ENCODE measurements at regions of chr2 and their contacts with region 1.

Region 1: DNA sequence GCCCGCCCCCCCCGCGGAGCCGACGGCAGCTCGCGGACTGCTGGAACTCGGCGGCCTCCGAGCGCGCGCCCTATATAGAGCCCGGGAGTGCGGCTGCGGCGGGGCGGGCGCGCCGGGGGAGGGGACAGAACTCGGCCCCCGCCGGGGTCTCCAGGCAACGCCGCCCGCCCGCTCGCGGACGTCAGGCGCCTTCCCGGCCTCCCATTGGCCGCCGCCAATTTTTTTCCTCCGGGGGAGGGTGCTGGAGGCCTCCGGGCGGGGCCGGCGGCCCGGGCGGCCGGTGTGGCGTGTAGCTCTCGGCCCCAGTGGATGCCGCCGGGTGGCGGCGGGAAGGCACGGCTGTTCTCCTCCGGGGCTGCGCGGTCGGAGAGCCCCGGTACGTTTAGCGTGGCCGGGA is at the start of gene ZFP36L2:
- DNase-seq: peak; percentile 89 to 98 (median 97)
- ATAC-seq: peak; percentile 59
- H3K4me3 ChIP-seq: peak within 1 kb of the TSS; percentile 97
- H3K4me3 Mint-ChIP-seq: peak within 1 kb of the TSS; percentile 93
- H3K27ac ChIP-seq: peak within 1 kb of the TSS; percentile 79 to 84
- H3K27ac Mint-ChIP-seq: peak within 1 kb of the TSS; percentile 98
- H3K4me1 ChIP-seq: peaks cover 31% of the 10 kb centered on the region
- H3K4me1 Mint-ChIP-seq: peaks cover 36% of the 10 kb centered on the region
- H3K27me3 ChIP-seq: no peaks in the 10 kb centered on the region
- H3K27me3 Mint-ChIP-seq: peaks cover 15% of the 10 kb centered on the region
- CTCF ChIP-seq: no peak
- total RNA-seq, gene ZFP36L2: 1,602 to 1,631 TPM

Region 2: DNA sequence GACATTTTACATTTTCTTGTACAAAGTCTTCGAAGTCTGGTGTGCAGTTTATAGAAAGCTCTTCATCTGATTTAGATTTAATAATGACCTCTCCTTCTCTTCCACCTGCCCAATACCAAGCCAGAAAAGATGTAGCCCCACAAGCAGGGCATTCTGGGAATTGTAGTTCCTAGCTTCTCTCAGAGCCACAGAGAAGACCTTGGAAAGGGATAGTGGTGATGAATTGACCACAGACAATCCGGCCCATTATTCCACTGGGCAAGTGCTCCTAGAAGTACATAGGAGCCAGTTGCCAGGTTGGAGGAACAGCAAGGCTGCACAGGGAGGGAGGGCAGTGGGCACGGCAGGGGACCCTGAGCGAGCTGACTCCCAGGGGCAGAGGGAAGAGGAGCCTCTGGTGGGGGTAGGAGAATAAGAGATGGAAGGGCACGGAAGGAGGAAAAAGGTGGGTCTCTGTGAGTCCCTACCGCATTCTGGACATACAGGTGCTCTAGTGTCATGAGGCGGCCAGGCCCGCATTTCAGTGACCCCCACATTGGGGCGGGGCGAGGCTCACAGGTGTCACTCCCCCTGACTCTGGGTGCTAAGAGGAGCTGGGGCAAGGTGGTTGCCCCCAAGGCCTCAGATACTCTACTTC is 281.7 kb before region 1 on chr2:
- CTCF ChIA-PET with region 1: interaction called, 7 read pairs
- POLR2A ChIA-PET with region 1: interaction called, 5 read pairs
- intact Hi-C with region 1: loop called (anchors 1 kb)
- DNase-seq: no peak
- ATAC-seq: no peak
- H3K4me3 ChIP-seq: no peak overlapping the region
- H3K4me3 Mint-ChIP-seq: no peak overlapping the region
- H3K27ac ChIP-seq: no peak overlapping the region
- H3K27ac Mint-ChIP-seq: no peak overlapping the region
- H3K4me1 ChIP-seq: no peaks in the 10 kb centered on the region
- H3K4me1 Mint-ChIP-seq: peaks cover 6% of the 10 kb centered on the region
- H3K27me3 ChIP-seq: no peaks in the 10 kb centered on the region
- H3K27me3 Mint-ChIP-seq: no peaks in the 10 kb centered on the region
- CTCF ChIP-seq: no peak

Region 3: GRCh38 chr2:43024515-43025011 is 202.0 kb before region 1 on chr2:
- CTCF ChIA-PET with region 1: interaction called, 9 read pairs
- POLR2A ChIA-PET with region 1: interaction called, 4 read pairs
- intact Hi-C with region 1: loop called (anchors 1 to 2 kb)
- DNase-seq: peak in 13 of 14 experiments; percentile 9 to 62 (median 37)
- ATAC-seq: peak; percentile 66
- H3K4me3 ChIP-seq: no peak overlapping the region
- H3K4me3 Mint-ChIP-seq: no peak overlapping the region
- H3K27ac ChIP-seq: no peak overlapping the region
- H3K27ac Mint-ChIP-seq: peak overlapping the region; percentile 69
- H3K4me1 ChIP-seq: peaks cover 10% of the 10 kb centered on the region
- H3K4me1 Mint-ChIP-seq: peaks cover 28% of the 10 kb centered on the region
- H3K27me3 ChIP-seq: no peaks in the 10 kb centered on the region
- H3K27me3 Mint-ChIP-seq: no peaks in the 10 kb centered on the region
- CTCF ChIP-seq: peak; percentile 67

Region 4: DNA sequence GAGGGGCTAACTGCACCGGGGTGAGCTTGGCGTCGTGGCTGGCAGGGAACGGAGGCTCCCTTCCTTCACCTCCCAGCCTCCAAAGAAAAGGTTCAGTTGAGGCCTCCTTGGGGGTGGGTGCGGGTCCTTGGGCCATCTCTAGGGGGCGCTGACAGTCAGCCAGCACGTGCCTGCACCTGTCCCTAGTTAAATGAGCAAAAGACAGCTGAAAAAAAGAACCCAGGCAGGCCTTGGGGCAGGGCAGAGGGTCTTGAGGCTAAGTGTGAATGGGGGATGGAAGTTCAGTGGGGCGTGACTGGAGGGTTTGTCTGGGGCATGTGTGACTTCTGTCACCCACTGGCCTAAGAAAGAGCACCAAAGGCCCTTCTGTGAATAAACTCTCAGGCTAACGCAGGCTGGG is 56.6 kb before region 1 on chr2:
- CTCF ChIA-PET with region 1: interaction called, 38 read pairs
- POLR2A ChIA-PET with region 1: interaction called, 790 read pairs
- intact Hi-C with region 1: loop called (anchors 1 to 2 kb)
- DNase-seq: peak; percentile 49 to 83 (median 70)
- ATAC-seq: peak; percentile 16
- H3K4me3 ChIP-seq: peak overlapping the region; percentile 26
- H3K4me3 Mint-ChIP-seq: peak overlapping the region; percentile 13
- H3K27ac ChIP-seq: peak overlapping the region; percentile 72 to 76
- H3K27ac Mint-ChIP-seq: peak overlapping the region; percentile 97
- H3K4me1 ChIP-seq: peaks cover 85% of the 10 kb centered on the region
- H3K4me1 Mint-ChIP-seq: peaks cover 82% of the 10 kb centered on the region
- H3K27me3 ChIP-seq: no peaks in the 10 kb centered on the region
- H3K27me3 Mint-ChIP-seq: no peaks in the 10 kb centered on the region
- CTCF ChIP-seq: peak; percentile 75

Region 5: DNA sequence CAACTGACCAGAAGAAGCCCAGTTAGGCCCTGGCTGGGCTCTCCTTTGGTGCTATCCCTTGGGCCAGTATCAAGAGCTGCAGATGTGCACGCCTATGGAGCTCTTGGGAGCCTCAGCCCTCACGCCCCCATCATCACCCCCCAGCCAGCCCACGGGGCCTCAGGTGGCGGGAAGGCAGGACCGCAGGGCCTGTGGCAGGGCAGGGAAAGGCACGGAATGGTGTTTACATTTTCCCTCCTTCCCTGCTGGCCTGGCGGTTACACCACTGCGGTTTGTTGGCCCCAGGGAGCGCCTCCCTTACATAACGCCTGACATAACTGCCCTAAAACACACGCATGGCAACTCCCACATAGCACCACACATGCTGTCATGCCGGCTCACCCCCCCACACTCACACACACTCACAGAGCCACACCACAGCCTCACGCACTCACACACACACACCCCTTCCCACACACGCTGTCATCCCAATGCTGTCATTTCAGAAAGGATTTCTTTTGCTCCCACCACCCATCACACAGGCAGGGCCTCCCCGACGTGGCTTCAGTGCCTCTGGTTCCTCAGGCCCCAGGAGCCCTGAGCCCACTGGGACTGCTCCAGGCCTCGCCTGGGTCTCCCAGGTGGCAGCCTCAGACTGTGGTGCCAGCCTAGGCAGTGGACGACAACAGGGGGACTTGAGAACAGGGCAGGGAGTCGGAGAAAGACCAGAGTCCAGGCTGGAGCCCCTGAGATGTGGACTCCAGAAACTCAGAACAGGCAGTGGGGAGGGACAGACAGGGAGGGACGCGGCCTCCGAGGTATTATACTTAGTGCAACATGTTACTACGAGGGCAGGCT is 15.9 kb before region 1 on chr2:
- CTCF ChIA-PET with region 1: no interaction called
- POLR2A ChIA-PET with region 1: interaction called, 506 read pairs
- intact Hi-C with region 1: no loop called
- DNase-seq: peak in 7 of 14 experiments; percentile 24 to 78 (median 60)
- ATAC-seq: peak; percentile 89
- H3K4me3 ChIP-seq: no peak overlapping the region
- H3K4me3 Mint-ChIP-seq: peak overlapping the region; percentile 63
- H3K27ac ChIP-seq: no peak overlapping the region
- H3K27ac Mint-ChIP-seq: peak overlapping the region; percentile 72
- H3K4me1 ChIP-seq: peaks cover 58% of the 10 kb centered on the region
- H3K4me1 Mint-ChIP-seq: peaks cover 49% of the 10 kb centered on the region
- H3K27me3 ChIP-seq: no peaks in the 10 kb centered on the region
- H3K27me3 Mint-ChIP-seq: no peaks in the 10 kb centered on the region
- CTCF ChIP-seq: no peak

Region 6: GRCh38 chr2:43370705-43371104 is 144.1 kb after region 1 on chr2:
- CTCF ChIA-PET with region 1: no interaction called
- POLR2A ChIA-PET with region 1: no interaction called
- intact Hi-C with region 1: no loop called
- DNase-seq: no peak
- ATAC-seq: no peak
- H3K4me3 ChIP-seq: no peak overlapping the region
- H3K4me3 Mint-ChIP-seq: no peak overlapping the region
- H3K27ac ChIP-seq: no peak overlapping the region
- H3K27ac Mint-ChIP-seq: no peak overlapping the region
- H3K4me1 ChIP-seq: no peaks in the 10 kb centered on the region
- H3K4me1 Mint-ChIP-seq: no peaks in the 10 kb centered on the region
- H3K27me3 ChIP-seq: no peaks in the 10 kb centered on the region
- H3K27me3 Mint-ChIP-seq: no peaks in the 10 kb centered on the region
- CTCF ChIP-seq: no peak

Region 7: GRCh38 chr2:43537137-43537536 is 310.6 kb after region 1 on chr2:
- CTCF ChIA-PET with region 1: no interaction called
- POLR2A ChIA-PET with region 1: no interaction called
- intact Hi-C with region 1: loop called in 1 of 2 experiments (anchors 5 kb)
- DNase-seq: peak in 3 of 14 experiments; percentile 47 to 55 (median 50)
- ATAC-seq: peak; percentile 98
- H3K4me3 ChIP-seq: no peak overlapping the region
- H3K4me3 Mint-ChIP-seq: peak overlapping the region; percentile 67
- H3K27ac ChIP-seq: no peak overlapping the region
- H3K27ac Mint-ChIP-seq: peak overlapping the region; percentile 80
- H3K4me1 ChIP-seq: peaks cover 3% of the 10 kb centered on the region
- H3K4me1 Mint-ChIP-seq: peaks cover 29% of the 10 kb centered on the region
- H3K27me3 ChIP-seq: no peaks in the 10 kb centered on the region
- H3K27me3 Mint-ChIP-seq: no peaks in the 10 kb centered on the region
- CTCF ChIP-seq: no peak

Region 8: DNA sequence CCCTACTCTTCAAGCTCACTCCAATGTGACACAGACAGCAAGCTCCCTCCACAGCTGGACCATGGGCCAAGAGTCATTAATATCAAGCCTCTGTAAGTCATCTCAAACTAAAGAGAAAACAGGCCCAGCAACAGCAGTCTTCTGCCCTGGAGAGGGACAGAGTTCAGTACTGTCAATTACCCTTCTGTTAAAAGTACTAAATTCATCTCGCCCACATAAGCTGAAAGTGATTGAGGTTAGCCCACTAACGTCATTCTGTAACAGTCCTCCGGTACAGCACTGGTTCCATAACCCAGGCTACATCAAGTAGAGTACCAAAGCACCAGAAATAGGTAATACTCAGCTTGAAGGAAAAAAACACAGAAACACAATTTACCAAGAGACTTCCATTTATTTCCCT is 343.4 kb after region 1 on chr2:
- CTCF ChIA-PET with region 1: no interaction called
- POLR2A ChIA-PET with region 1: no interaction called
- intact Hi-C with region 1: no loop called
- DNase-seq: peak in 2 of 14 experiments; percentile 13 to 27
- ATAC-seq: peak; percentile 55
- H3K4me3 ChIP-seq: no peak overlapping the region
- H3K4me3 Mint-ChIP-seq: no peak overlapping the region
- H3K27ac ChIP-seq: no peak overlapping the region
- H3K27ac Mint-ChIP-seq: peak overlapping the region; percentile 12
- H3K4me1 ChIP-seq: peaks cover 4% of the 10 kb centered on the region
- H3K4me1 Mint-ChIP-seq: peaks cover 20% of the 10 kb centered on the region
- H3K27me3 ChIP-seq: no peaks in the 10 kb centered on the region
- H3K27me3 Mint-ChIP-seq: no peaks in the 10 kb centered on the region
- CTCF ChIP-seq: no peak

Region 9: DNA sequence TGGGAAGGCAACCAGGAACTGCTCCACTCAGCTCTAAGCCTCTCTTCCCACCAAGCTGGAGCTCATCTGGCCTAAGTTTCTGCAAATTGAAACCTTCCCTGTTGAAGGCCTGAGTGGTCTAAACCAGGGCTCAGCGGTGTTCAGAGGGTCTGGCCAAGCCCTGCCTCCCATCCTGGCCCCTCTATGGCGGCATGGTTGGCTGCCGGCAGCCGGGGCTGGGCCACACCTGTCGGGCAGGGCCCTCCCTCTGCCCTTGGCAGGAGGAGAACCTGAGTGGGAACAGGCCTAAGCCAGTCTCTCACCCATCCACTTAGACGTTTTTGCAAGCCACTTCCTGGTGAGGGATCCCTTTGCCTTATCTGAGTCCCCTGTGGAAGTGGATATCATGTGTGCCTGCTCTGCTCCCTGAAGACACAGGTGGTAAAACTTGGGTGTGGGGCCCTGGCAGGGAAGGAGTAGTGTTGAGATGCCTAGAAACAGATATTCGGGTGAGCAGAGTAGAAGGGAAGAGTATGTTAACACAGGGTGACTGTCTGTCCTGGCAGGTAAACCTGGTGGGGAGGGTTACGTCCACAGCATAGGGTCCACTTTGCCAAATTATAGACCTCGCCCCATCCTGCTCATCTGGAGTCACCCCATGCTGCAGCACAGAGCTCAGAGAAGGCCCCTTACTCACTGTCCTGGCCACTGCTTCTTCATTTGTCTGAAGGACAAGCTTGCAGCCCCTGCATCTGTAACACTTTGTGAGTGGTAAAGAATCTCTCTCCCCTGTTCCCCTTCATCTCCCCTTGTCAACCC is 1845.7 kb after region 1 on chr2:
- CTCF ChIA-PET with region 1: no interaction called
- POLR2A ChIA-PET with region 1: no interaction called
- intact Hi-C with region 1: no loop called
- DNase-seq: no peak
- ATAC-seq: no peak
- H3K4me3 ChIP-seq: no peak overlapping the region
- H3K4me3 Mint-ChIP-seq: no peak overlapping the region
- H3K27ac ChIP-seq: no peak overlapping the region
- H3K27ac Mint-ChIP-seq: no peak overlapping the region
- H3K4me1 ChIP-seq: no peaks in the 10 kb centered on the region
- H3K4me1 Mint-ChIP-seq: no peaks in the 10 kb centered on the region
- H3K27me3 ChIP-seq: peaks cover 9 to 13% of the 10 kb centered on the region in 2 experiments
- H3K27me3 Mint-ChIP-seq: peaks cover 53% of the 10 kb centered on the region
- CTCF ChIP-seq: no peak